ENCODE measurements at regions of chrX and their contacts with region 1.

Region 1: GRCh38 chrX:107672955-107673378 is 44.7 kb downstream of the PRPS1 start:
- DNase-seq: peak in 5 of 10 donors; percentile 32 to 53 (median 42)
- H3K4me3 ChIP-seq: peak overlapping the region in 1 of 59 donors; percentile 14
- H3K27ac ChIP-seq: peak overlapping the region in 28 of 59 donors; percentile 3 to 74 (median 43)
- H3K27me3 ChIP-seq: peaks cover 0 to 83% (median 22%) of the 10 kb centered on the region in 45 donors
- CTCF ChIP-seq: peak; percentile 35 to 78 (median 63)

Region 2: GRCh38 chrX:107599450-107599861 is 73.5 kb before region 1 on chrX:
- intact Hi-C with region 1: no loop called
- DNase-seq: no peak
- H3K4me3 ChIP-seq: no peak overlapping the region
- H3K27ac ChIP-seq: no peak overlapping the region
- H3K27me3 ChIP-seq: peaks cover 0 to 89% (median 18%) of the 10 kb centered on the region in 45 donors
- CTCF ChIP-seq: no peak

Region 3: GRCh38 chrX:107710617-107711391 is 37.8 kb after region 1 on chrX:
- intact Hi-C with region 1: loop called (anchors 5 kb)
- DNase-seq: no peak
- H3K4me3 ChIP-seq: no peak overlapping the region
- H3K27ac ChIP-seq: peak overlapping the region in 28 of 59 donors; percentile 14 to 95 (median 47)
- H3K27me3 ChIP-seq: peaks cover 0 to 66% (median 16%) of the 10 kb centered on the region in 45 donors
- CTCF ChIP-seq: no peak

Region 4: DNA sequence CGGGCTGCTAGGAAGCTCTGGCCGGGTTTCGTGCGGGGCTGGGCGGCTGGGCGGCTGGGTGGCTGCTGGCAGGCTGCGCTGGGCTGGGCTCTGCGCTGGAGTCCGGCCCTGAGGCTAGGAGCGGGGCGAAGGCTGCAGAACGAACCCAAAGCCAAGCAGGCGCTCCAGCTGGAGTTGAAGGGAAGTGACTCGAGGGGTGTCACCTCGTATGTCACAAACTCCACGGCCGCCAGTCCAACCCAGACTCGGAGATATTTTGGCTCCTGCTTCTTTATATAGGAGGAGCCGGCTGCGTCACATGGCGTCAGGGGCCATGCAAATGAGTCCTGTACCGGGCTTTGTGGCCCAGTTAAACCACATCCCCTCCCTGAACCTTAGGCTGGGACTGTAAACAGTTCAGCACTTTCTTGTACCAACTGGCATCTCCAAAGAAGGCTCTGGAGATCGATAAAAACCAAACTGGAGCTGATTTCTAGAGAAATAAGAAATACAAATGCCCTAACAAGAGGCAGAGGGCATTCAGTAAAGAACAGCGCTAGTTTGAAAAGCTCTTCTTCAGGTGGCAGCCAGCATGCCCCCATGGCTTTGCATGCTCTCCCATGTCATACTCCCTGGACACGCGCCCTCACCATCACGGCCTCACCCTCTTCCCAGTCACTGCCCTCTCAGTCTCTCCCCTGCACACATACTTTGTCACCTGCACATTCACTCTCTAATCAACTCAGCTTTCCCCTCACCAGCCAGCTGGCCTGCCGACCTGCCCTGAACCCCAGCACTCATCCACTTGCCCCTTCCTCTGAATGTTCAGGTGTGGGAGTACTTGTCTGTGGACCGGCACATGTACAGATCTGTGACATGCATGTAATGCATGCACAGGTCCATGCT is 44.1 kb after region 1 on chrX:
- intact Hi-C with region 1: loop called (anchors 5 kb)
- DNase-seq: peak; percentile 57 to 86 (median 83)
- H3K4me3 ChIP-seq: peak overlapping the region; percentile 52 to 80 (median 69)
- H3K27ac ChIP-seq: peak overlapping the region; percentile 76 to 98 (median 91)
- H3K27me3 ChIP-seq: peaks cover 0 to 91% (median 38%) of the 10 kb centered on the region in 45 donors
- CTCF ChIP-seq: peak in 1 of 56 donors; percentile 15

Region 5: DNA sequence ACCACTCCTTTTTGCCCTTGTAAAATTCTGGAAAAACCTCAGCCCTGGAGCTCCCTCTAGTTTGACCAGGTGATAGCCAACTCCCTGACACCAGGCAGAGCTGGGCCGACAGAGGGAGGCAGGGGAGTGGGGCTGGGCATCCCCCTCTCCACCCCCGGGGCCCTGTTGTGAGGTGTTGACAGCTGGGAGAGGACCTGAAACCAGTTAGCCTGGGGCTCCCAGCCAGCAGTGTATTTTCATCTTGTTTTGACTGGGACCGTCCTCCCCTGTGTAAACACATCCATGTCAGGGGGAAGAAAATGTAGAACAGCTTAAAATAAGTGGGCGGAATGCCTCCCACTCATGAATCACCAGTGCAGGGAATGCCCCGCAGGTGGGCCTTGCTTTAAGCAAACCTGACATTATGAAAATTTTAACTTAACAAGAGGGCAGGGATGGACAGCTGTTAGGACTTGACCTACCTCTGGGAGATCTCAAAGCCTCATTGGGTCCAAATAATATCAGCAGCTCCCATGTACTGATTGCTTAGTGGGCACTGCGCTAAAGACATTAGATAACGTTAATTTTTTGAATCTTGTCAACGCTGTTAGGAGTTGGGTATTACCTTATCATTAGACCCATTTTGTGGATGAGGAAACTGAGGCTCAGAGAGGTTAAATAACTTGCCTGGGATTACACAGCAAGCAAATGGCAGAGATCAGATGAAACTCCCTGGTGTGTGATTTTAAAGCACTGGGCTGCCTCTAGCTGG is 56.8 kb after region 1 on chrX:
- intact Hi-C with region 1: no loop called
- DNase-seq: no peak
- H3K4me3 ChIP-seq: no peak overlapping the region
- H3K27ac ChIP-seq: peak overlapping the region in 53 of 59 donors; percentile 4 to 84 (median 70)
- H3K27me3 ChIP-seq: peaks cover 0 to 91% (median 15%) of the 10 kb centered on the region in 45 donors
- CTCF ChIP-seq: no peak

Measured in dorsolateral prefrontal cortex (tissue), 120 donors.